HepG2 (cell line): ENCODE measurements at regions of chr16 and their contacts with region 1.

Region 1: DNA sequence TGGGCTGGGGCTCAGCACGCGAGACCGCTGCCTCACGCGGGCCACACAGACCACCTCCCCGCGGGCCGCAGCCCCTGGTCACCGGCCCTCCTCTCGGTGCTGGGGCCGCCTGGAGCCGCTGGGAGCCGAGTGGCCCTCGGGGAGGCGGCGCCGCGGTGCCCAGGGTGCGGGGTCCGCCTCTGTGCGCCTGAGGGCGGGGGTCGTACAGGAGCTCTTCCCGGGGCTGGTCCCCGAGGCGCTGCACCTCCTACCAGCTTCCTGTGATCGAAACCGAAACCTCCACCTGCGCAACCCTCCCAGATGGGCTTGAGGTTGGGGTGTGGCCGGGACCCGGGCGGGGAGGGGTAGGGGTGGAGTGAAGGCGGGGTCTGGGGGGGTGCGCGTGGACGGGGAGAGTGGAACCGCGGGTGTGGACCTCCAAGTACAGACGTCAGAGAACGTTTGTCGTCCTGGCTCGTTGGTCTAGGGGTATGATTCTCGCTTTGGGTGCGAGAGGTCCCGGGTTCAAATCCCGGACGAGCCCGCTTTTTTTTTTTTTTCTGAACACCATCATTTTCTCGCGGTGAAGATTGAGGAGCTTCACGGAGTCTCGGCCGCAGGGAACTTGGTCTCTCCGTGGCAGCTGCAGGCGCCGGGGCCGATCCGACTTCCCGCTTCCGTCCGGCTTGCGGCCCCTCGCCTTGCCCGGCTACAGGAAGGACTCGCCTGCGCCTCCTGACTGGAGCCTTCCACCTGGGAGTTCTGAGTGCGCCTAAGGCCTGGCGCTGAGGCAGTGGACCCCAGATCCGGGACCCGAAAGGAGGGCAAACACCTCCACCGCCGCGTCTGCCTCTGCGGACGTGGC is 23.9 kb downstream of the ZNF213 start:
- DNase-seq: peak; percentile 87
- ATAC-seq: peak; percentile 68
- H3K4me3 ChIP-seq: peak overlapping the region; percentile 68 to 87 (median 81)
- H3K27ac ChIP-seq: peak overlapping the region; percentile 91
- H3K4me1 ChIP-seq: peaks cover 46% of the 10 kb centered on the region
- H3K27me3 ChIP-seq: no peaks in the 10 kb centered on the region; a peak in 1 of 5 replicates
- CTCF ChIP-seq: 0 out of 2 replicates have a peak, but pooled peaks have one; percentile 15
- EP300 ChIP-seq: no peak
- POLR2A ChIP-seq: peak; percentile 43 to 62; a peak in 3 of 4 replicates
- RAD21 ChIP-seq: no peak

Region 2: GRCh38 chr16:3129137-3130131 is 29.3 kb before region 1 on chr16:
- CTCF ChIA-PET with region 1: interaction called, 3 read pairs
- POLR2A ChIA-PET with region 1: interaction called, 29 read pairs
- in situ Hi-C with region 1: no loop called
- intact Hi-C with region 1: no loop called
- DNase-seq: peak; percentile 82
- ATAC-seq: peak; percentile 44
- H3K4me3 ChIP-seq: peak overlapping the region; percentile 25 to 67 (median 47); a peak in 5 of 6 replicates
- H3K27ac ChIP-seq: no peak overlapping the region
- H3K4me1 ChIP-seq: peaks cover 46% of the 10 kb centered on the region
- H3K27me3 ChIP-seq: no peaks in the 10 kb centered on the region; a peak in 1 of 5 replicates
- CTCF ChIP-seq: peak; percentile 88
- EP300 ChIP-seq: no peak
- POLR2A ChIP-seq: peak in 1 of 2 experiments; percentile 39; a peak in 1 of 4 replicates
- RAD21 ChIP-seq: peak; percentile 72

Region 3: GRCh38 chr16:3173892-3174617 is 15.4 kb after region 1 on chr16:
- CTCF ChIA-PET with region 1: interaction called, 3 read pairs
- POLR2A ChIA-PET with region 1: interaction called, 51 read pairs
- in situ Hi-C with region 1: no loop called
- intact Hi-C with region 1: loop called (anchors 2 kb)
- DNase-seq: peak; percentile 65
- ATAC-seq: no peak
- H3K4me3 ChIP-seq: peak overlapping the region; percentile 5 to 71 (median 50)
- H3K27ac ChIP-seq: no peak overlapping the region
- H3K4me1 ChIP-seq: peaks cover 50% of the 10 kb centered on the region
- H3K27me3 ChIP-seq: peaks cover 0 to under 1% of the 10 kb centered on the region in 2 experiments; a peak in 1 of 5 replicates
- CTCF ChIP-seq: peak; percentile 72
- EP300 ChIP-seq: no peak
- POLR2A ChIP-seq: no peak
- RAD21 ChIP-seq: no peak